CD14-positive monocyte (primary cell): ENCODE measurements at regions of chr15 and their contacts with region 1.

Region 1: GRCh38 chr15:100438570-100438969 is 90.2 kb downstream of the CERS3 start:
- DNase-seq: peak; percentile 18 to 60 (median 18)
- H3K4me3 ChIP-seq: no peak overlapping the region
- H3K4me3 Mint-ChIP-seq: no peak overlapping the region
- H3K27ac ChIP-seq: no peak overlapping the region
- H3K27ac Mint-ChIP-seq: peak overlapping the region in 3 of 7 donors; percentile 16 to 77 (median 73)
- H3K4me1 ChIP-seq: no peaks in the 10 kb centered on the region
- H3K4me1 Mint-ChIP-seq: peaks cover 5% of the 10 kb centered on the region
- H3K27me3 ChIP-seq: no peaks in the 10 kb centered on the region
- H3K27me3 Mint-ChIP-seq: peaks cover 3 to 17% (median 8%) of the 10 kb centered on the region in 3 donors
- CTCF ChIP-seq: no peak

Region 2: DNA sequence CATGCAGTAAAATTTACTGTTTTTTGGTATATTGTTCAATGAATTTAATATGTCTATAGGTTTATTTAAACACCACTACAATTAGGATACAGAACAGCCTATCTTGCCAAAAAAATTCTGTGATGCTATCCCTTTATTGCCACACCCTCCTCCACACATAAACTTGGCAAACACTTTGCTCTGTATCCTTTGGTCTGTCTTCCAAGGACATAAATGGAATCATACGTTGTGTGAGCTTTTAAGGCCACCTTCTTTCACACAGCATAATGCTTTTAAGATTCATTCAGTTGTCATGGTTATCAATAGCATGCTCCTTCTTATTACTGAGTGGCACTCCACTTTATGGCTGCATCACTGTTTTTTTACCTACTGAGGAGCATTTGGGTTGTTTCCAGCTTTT is 18.6 kb after region 1 on chr15:
- intact Hi-C with region 1: no loop called
- DNase-seq: no peak
- H3K4me3 ChIP-seq: no peak overlapping the region
- H3K4me3 Mint-ChIP-seq: no peak overlapping the region
- H3K27ac ChIP-seq: no peak overlapping the region
- H3K27ac Mint-ChIP-seq: no peak overlapping the region
- H3K4me1 ChIP-seq: no peaks in the 10 kb centered on the region
- H3K4me1 Mint-ChIP-seq: no peaks in the 10 kb centered on the region
- H3K27me3 ChIP-seq: no peaks in the 10 kb centered on the region
- H3K27me3 Mint-ChIP-seq: peaks cover 1 to 5% (median 5%) of the 10 kb centered on the region in 3 donors
- CTCF ChIP-seq: no peak

Region 3: DNA sequence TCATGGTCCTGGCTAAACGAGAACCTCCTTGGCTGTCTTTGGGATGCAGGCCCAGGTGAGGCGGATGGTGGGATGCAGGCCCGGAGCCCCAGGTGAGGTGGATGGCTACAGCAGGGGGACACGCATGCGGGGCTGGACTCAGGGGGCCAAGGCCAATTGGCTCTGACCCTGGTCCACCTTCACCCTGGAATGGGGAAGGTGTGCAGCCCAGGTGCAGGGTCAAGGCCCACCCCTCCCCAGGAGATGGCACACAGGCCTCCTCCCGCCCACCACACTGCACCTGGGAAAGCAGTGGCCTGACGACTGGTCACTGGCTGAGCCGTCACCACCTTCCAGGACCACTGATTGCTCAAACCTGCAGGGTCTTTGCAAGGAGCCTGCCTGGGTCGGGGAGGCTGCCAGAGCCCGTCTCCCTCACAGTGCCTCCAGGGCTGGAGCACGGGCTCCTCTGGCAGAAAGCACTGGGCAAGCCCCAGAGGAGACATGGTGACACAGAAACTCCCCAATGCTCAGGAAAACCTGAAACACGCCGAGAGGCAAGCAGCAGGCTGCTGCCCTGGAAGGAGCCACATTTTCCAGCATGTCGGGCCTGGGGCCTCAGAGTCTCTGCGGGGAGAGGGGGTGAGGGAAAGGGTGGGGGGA is 640.2 kb after region 1 on chr15:
- intact Hi-C with region 1: loop called in 1 of 2 experiments (anchors 5 kb)
- DNase-seq: no peak
- H3K4me3 ChIP-seq: no peak overlapping the region
- H3K4me3 Mint-ChIP-seq: no peak overlapping the region
- H3K27ac ChIP-seq: no peak overlapping the region
- H3K27ac Mint-ChIP-seq: no peak overlapping the region
- H3K4me1 ChIP-seq: no peaks in the 10 kb centered on the region
- H3K4me1 Mint-ChIP-seq: no peaks in the 10 kb centered on the region
- H3K27me3 ChIP-seq: peaks cover 0 to 3% of the 10 kb centered on the region in 2 donors
- H3K27me3 Mint-ChIP-seq: peaks cover 3 to 16% (median 13%) of the 10 kb centered on the region in 3 donors
- CTCF ChIP-seq: no peak